ENCODE measurements at regions of chr2 and their contacts with region 1.

Region 1: DNA sequence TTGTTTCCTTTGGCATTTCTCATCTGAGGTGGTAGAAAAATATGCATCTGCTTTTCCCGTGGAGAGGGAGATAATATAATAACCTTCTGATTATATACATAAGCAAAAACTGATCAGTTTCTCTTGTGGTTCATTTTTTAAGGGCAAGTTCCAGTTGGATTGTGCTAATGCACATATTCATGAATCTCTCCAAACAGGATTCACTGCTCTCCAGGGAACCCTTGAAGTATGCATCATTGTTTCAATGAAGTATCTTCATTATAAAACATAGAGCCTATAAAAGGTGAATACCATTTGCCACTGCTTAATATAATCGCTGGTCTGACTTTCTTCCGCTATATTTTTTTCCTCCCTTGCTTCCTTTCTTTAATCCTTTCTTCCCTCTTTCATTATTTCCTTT is 384.7 kb downstream of the FIGN start:
- DNase-seq: no peak
- ATAC-seq: no peak
- H3K4me3 ChIP-seq: no peak overlapping the region
- H3K27ac ChIP-seq: no peak overlapping the region
- H3K4me1 ChIP-seq: peaks cover 2 to 4% of the 10 kb centered on the region in 2 donors
- H3K27me3 ChIP-seq: no peaks in the 10 kb centered on the region

Region 2: DNA sequence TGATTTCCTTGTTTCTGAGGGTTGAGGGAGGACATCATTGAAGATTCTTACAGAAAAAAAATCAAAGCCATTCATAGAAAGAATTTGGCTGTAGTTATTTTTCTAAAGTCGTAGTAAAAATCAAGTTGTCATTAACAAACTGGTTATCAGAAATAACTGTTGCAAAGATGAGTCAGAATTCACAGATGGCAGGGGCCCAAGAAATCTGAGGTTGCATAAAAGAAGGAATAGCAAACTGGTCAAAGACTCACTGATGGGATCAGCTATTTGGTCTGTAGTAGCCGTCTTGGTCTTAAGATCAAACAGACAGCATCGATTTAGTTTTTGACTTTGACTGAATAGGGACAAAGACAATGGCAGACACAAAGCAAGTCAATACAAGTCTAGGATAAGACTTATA is 50.3 kb after region 1 on chr2:
- intact Hi-C with region 1: no loop called
- DNase-seq: no peak
- ATAC-seq: no peak
- H3K4me3 ChIP-seq: no peak overlapping the region
- H3K27ac ChIP-seq: no peak overlapping the region
- H3K4me1 ChIP-seq: peaks cover 0 to 1% of the 10 kb centered on the region in 2 donors
- H3K27me3 ChIP-seq: no peaks in the 10 kb centered on the region

Region 3: GRCh38 chr2:163878531-163879117 is 527.5 kb after region 1 on chr2:
- intact Hi-C with region 1: loop called in 1 of 2 experiments (anchors 5 kb)
- DNase-seq: no peak
- ATAC-seq: no peak
- H3K4me3 ChIP-seq: no peak overlapping the region
- H3K27ac ChIP-seq: no peak overlapping the region
- H3K4me1 ChIP-seq: no peaks in the 10 kb centered on the region
- H3K27me3 ChIP-seq: no peaks in the 10 kb centered on the region

Region 4: DNA sequence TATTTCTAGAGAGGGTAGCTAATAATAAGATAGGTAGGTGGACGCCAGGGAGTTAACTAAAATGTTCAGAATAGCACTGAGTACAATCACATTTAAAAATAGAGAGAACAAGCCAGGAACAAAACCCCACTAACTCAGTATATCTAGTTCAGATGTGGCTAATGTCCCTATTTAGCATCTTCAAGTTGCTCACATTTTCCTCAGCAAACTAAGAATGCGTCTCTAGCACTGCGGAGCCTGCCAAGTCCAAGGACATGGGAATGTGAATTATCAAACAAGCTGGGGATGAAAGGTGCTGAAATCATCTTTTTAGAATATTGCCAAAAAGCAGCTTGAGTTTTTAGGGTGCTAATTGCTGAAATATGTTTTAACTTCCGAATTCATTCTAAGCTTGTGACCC is 783.2 kb after region 1 on chr2:
- intact Hi-C with region 1: loop called (anchors 5 to 10 kb)
- DNase-seq: no peak
- ATAC-seq: no peak
- H3K4me3 ChIP-seq: no peak overlapping the region
- H3K27ac ChIP-seq: no peak overlapping the region
- H3K4me1 ChIP-seq: no peaks in the 10 kb centered on the region
- H3K27me3 ChIP-seq: no peaks in the 10 kb centered on the region

Measured in aorta (tissue), 5 donors.